ENCODE measurements at regions of chr12 and their contacts with region 1.

Region 1: GRCh38 chr12:123860377-123860776 is 98.3 kb downstream of the DNAH10 start:
- DNase-seq: no peak
- ATAC-seq: no peak
- H3K4me3 ChIP-seq: no peak overlapping the region
- H3K27ac ChIP-seq: no peak overlapping the region
- H3K4me1 ChIP-seq: no peaks in the 10 kb centered on the region
- H3K27me3 ChIP-seq: no peaks in the 10 kb centered on the region
- CTCF ChIP-seq: no peak

Region 2: DNA sequence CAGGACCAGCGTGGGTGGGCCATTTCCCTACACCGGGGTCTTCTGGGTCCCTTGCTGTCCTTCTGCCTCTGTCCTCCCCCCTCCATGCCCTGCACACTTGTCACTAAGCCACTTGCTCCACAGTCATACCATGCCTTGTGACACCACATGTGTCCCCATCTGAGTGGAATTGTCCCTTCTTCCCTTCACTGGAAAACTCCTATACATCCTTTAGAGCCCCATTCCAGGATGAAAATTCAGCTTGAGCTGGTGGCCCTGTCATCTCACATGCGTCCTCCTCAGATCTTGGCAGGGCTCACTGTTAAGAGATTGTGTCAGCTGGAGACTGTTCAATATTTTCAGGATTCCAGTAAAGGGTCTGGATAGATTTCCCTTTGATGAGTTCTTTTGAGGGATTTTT is 10.9 kb before region 1 on chr12:
- CTCF ChIA-PET with region 1: no interaction called
- POLR2A ChIA-PET with region 1: interaction called, 13 read pairs
- in situ Hi-C with region 1: no loop called
- intact Hi-C with region 1: no loop called
- DNase-seq: no peak
- ATAC-seq: 0 out of 2 replicates have a peak, but pooled peaks have one; percentile 48
- H3K4me3 ChIP-seq: no peak overlapping the region
- H3K27ac ChIP-seq: no peak overlapping the region
- H3K4me1 ChIP-seq: no peaks in the 10 kb centered on the region
- H3K27me3 ChIP-seq: no peaks in the 10 kb centered on the region; the same call in 1 of the 2 replicates
- CTCF ChIP-seq: no peak

Region 3: DNA sequence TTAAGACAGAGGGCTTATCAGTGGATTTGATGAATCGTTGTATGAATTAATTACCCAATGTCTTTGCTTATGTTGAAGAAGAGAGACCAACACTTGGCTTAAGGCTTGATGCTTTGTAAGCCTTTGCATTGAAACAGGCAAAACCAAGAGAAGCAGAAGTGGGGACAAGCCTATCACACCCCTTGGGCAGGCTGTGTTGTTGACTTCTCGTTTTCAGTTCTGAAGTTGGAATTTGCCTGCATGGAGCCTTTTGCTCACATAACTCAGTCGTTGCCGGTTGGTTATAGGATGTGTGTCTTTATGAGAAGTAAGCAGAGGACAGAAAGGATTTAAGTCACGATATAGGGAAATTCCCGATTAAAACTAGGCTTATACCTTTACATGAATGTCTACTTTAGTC is 17.6 kb after region 1 on chr12:
- CTCF ChIA-PET with region 1: no interaction called
- POLR2A ChIA-PET with region 1: interaction called, 23 read pairs
- in situ Hi-C with region 1: no loop called
- intact Hi-C with region 1: no loop called
- DNase-seq: no peak
- ATAC-seq: no peak
- H3K4me3 ChIP-seq: no peak overlapping the region
- H3K27ac ChIP-seq: no peak overlapping the region
- H3K4me1 ChIP-seq: no peaks in the 10 kb centered on the region
- H3K27me3 ChIP-seq: peaks cover 14% of the 10 kb centered on the region
- CTCF ChIP-seq: no peak